Activated T-helper 2 cell treated with anti-CD3 and anti-CD28 coated beads, Interferon-gamma antibody, Interleukin-2, Interleukin-4, amounts not matched to agents 10 μg/mL and 5 μg/mL and 100 μg/mL, durations not matched to agents 14 hours and 24 hours and 36 hours (primary cell): ENCODE measurements at regions of chr2 and their contacts with region 1.

Region 1: DNA sequence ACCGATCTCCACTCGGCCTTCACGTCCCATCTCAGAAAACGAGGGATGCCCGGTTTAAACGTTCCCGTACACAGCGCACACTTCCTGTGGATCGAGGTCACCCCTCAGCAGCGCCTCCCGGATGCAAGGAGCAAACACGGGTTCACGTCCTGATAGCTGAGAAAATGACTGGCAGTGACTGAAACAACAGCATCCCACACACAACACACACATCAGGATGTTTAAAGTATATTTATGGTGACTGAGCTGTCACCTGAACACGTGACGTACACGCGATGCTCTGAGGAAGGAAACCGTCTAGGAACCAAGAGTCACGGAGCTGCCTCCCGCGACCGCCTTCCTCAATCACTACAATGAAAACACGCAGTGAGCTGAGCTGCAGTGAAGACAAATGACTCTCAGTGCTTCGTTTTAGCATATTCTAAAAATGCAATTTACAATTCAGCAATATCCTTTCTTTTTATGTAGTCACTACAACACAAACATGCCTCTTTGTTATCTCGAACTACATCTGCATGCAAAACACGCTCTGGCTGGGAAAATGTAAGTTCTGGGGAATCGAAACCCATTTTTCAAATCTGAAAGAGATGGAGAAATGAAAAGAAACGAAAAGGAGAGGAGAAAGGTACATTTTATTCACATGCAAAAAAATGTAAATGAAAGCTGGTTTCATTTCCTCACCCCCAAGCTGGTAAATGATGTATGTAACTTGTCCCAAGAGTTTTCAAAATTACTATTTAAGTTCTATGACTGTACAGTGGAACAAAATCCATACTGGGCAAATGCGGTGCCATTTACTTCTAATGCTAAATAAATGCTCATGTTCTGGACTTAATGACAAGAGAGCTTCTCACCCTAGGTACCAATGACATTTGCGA is 19.8 kb downstream of the HDAC4 start:
- DNase-seq: peak; percentile 61
- H3K4me3 Mint-ChIP-seq: peak overlapping the region; percentile 73
- H3K27ac Mint-ChIP-seq: peak overlapping the region; percentile 97
- H3K4me1 Mint-ChIP-seq: peaks cover 21% of the 10 kb centered on the region
- H3K27me3 Mint-ChIP-seq: no peaks in the 10 kb centered on the region

Region 2: DNA sequence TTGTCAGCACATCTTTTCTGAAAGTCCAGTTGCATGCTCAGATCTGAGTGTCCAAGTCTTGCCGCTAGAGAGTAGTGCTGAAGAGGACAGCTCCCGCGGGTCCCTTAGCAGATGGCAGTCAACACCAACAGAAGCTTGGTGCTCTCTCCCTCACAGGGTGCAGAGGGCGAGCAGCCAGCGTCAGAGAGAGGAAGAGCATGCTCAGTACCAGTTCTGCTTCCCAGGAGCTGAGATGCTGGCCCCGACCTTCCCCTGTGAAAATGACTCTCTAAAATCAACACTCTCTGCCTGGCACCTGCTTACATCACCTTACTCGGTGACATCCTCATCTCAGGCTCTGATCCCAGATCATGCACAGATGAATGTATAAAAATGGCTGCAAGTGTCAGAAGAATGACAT is 619.2 kb before region 1 on chr2:
- intact Hi-C with region 1: no loop called
- DNase-seq: no peak
- H3K4me3 Mint-ChIP-seq: no peak overlapping the region
- H3K27ac Mint-ChIP-seq: no peak overlapping the region
- H3K4me1 Mint-ChIP-seq: no peaks in the 10 kb centered on the region
- H3K27me3 Mint-ChIP-seq: peaks cover 3% of the 10 kb centered on the region

Region 3: DNA sequence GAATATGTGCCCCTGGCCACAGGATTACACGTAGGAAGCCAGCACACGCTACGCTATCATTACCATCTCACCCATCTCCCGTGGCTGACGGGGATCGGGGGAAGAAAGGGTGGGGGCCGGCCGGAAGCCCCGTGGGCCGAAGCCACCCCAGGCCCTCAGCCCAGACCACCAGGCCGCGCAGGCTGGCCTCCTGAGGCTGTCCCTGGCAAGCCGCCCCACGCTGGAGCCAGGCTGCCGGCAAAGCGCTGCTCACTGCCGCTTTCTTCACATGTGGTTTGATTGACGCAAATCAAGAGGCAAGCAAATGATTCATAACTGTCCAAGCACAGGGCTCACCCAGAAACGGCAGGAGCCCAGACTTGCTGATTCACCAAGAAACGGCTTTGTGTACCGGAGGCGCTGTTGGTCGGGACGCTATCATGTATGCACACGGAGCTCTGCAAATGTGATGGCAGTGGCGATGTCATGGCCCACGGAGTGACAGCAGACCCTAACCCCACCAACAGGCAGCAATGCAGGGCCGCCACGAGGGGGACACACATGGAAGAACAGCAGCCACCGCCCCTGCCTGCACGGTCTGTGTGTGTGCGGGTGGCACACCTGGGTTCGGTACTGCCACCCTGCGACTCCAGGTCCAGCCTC is 105.9 kb before region 1 on chr2:
- intact Hi-C with region 1: loop called (anchors 2 kb)
- DNase-seq: peak; percentile 81
- H3K4me3 Mint-ChIP-seq: peak overlapping the region; percentile 58
- H3K27ac Mint-ChIP-seq: peak overlapping the region; percentile 86
- H3K4me1 Mint-ChIP-seq: peaks cover 69% of the 10 kb centered on the region
- H3K27me3 Mint-ChIP-seq: peaks cover 2% of the 10 kb centered on the region

Region 4: DNA sequence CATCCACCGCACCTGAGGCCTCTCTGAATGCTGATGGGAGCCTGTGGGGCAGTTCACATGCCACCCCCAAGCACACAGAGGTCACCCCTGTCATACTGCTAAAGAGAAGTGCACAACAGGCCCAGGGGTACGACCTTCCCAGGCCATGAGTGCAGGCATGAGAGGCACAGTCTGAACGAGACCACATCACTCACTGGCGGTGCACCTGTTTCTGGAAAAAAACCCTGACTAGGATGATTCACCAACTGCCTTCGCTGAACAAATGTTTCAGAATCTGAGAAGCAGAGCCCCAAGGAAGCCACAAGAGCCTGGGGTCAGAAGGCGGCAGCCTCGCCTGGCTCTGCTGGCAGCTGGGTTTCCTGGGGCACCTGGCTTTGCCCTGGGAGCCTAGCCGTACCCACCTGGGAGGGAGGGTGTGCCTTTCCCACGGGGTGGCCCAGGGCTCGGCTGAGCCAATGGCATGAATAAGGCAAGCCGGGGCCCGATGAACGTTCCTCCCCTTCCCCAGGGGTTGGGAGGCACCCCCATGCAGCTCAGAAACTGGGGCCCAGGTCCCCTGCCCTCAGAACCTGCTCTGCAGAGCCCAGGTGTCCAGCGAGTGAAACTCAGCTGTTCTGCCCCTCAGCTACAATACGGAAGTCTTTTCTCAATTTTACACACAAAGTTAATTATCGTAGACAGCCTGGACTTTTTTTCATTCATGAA is 54.1 kb before region 1 on chr2:
- intact Hi-C with region 1: loop called (anchors 1 kb)
- DNase-seq: peak; percentile 71
- H3K4me3 Mint-ChIP-seq: peak overlapping the region; percentile 40
- H3K27ac Mint-ChIP-seq: peak overlapping the region; percentile 90
- H3K4me1 Mint-ChIP-seq: peaks cover 73% of the 10 kb centered on the region
- H3K27me3 Mint-ChIP-seq: no peaks in the 10 kb centered on the region

Region 5: GRCh38 chr2:239401067-239401880 is 20.2 kb after region 1 on chr2:
- intact Hi-C with region 1: loop called (anchors 1 kb)
- DNase-seq: peak; percentile 98
- H3K4me3 Mint-ChIP-seq: peak overlapping the region; percentile 91
- H3K27ac Mint-ChIP-seq: peak overlapping the region; percentile 99
- H3K4me1 Mint-ChIP-seq: peaks cover 33% of the 10 kb centered on the region
- H3K27me3 Mint-ChIP-seq: peaks cover 9% of the 10 kb centered on the region

Region 6: DNA sequence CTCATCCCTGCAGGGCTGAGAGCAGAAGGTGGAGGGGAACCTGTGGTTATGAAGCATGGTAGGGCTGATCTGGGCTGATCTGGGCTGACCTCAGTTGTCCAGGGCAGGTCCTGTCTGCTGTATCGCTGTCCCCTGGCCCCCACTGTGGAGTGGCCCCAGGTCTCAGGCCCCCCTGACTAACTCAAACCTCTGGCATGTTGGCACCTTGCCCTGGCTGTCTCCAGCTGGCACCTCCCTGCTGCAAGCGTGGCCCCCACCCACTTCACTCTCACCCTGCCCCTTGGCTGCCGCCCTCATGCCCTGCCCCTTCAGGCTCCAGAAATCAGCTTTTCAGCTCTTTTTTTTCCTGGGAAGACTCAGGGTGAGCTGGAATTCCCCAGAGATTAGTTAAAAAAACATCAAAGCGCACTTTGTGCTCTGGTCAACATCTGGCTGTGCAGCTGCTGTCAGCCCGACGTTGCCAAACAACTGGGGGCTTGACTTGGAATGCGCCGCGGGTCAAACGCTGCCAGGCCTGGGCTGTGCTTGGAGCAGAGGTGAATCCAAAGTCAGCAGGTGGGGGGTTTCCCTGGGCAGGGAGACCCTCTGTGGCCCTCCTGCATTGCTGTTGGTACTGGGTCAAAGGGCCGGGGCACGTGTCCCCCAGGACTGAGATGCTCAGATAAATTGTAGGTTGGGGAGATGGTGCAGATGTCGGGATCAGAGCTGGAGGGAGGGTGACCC is 193.5 kb after region 1 on chr2:
- intact Hi-C with region 1: no loop called
- DNase-seq: no peak
- H3K4me3 Mint-ChIP-seq: no peak overlapping the region
- H3K27ac Mint-ChIP-seq: no peak overlapping the region
- H3K4me1 Mint-ChIP-seq: peaks cover 2% of the 10 kb centered on the region
- H3K27me3 Mint-ChIP-seq: peaks cover 6% of the 10 kb centered on the region